ENCODE measurements at regions of chr11 and their contacts with region 1.

Region 1: GRCh38 chr11:7612661-7613393 is 60.5 kb downstream of the CYB5R2 start:
- DNase-seq: peak; percentile 79 to 81
- H3K4me3 ChIP-seq: no peak overlapping the region
- H3K4me3 Mint-ChIP-seq: peak overlapping the region; percentile 61
- H3K27ac Mint-ChIP-seq: peak overlapping the region; percentile 73
- H3K4me1 ChIP-seq: peaks cover 63% of the 10 kb centered on the region
- H3K4me1 Mint-ChIP-seq: peaks cover 44% of the 10 kb centered on the region
- H3K27me3 ChIP-seq: no peaks in the 10 kb centered on the region
- H3K27me3 Mint-ChIP-seq: no peaks in the 10 kb centered on the region
- CTCF ChIP-seq: no peak

Region 2: GRCh38 chr11:7600205-7600775 is 12.5 kb before region 1 on chr11:
- CTCF ChIA-PET with region 1: no interaction called
- POLR2A ChIA-PET with region 1: interaction called, 4 read pairs
- intact Hi-C with region 1: loop called (anchors 1 kb)
- DNase-seq: peak; percentile 81 to 87
- H3K4me3 ChIP-seq: no peak overlapping the region
- H3K4me3 Mint-ChIP-seq: peak overlapping the region; percentile 19
- H3K27ac Mint-ChIP-seq: peak overlapping the region; percentile 79
- H3K4me1 ChIP-seq: peaks cover 68% of the 10 kb centered on the region
- H3K4me1 Mint-ChIP-seq: peaks cover 36% of the 10 kb centered on the region
- H3K27me3 ChIP-seq: no peaks in the 10 kb centered on the region
- H3K27me3 Mint-ChIP-seq: no peaks in the 10 kb centered on the region
- CTCF ChIP-seq: no peak

Region 3: GRCh38 chr11:7637447-7638157 is 24.8 kb after region 1 on chr11:
- CTCF ChIA-PET with region 1: no interaction called
- POLR2A ChIA-PET with region 1: no interaction called
- intact Hi-C with region 1: no loop called
- DNase-seq: no peak
- H3K4me3 ChIP-seq: no peak overlapping the region
- H3K4me3 Mint-ChIP-seq: no peak overlapping the region
- H3K27ac Mint-ChIP-seq: no peak overlapping the region
- H3K4me1 ChIP-seq: no peaks in the 10 kb centered on the region
- H3K4me1 Mint-ChIP-seq: peaks cover 14% of the 10 kb centered on the region
- H3K27me3 ChIP-seq: no peaks in the 10 kb centered on the region
- H3K27me3 Mint-ChIP-seq: no peaks in the 10 kb centered on the region
- CTCF ChIP-seq: no peak